ENCODE measurements at regions of chr6 and their contacts with region 1.

Region 1: GRCh38 chr6:43758617-43759050 is 11.4 kb upstream of the VEGFA start:
- DNase-seq: peak; percentile 68
- H3K4me3 ChIP-seq: no peak overlapping the region
- H3K27ac ChIP-seq: no peak overlapping the region
- H3K4me1 ChIP-seq: peaks cover 0 to 8% (median 0%) of the 10 kb centered on the region in 6 donors
- H3K27me3 ChIP-seq: no peaks in the 10 kb centered on the region
- CTCF ChIP-seq: peak in 7 of 11 experiments; percentile 33 to 64 (median 56)
- POLR2A ChIP-seq: no peak

Region 2: GRCh38 chr6:43496370-43497128 is 262.1 kb before region 1 on chr6:
- intact Hi-C with region 1: no loop called
- DNase-seq: no peak
- H3K4me3 ChIP-seq: no peak overlapping the region
- H3K27ac ChIP-seq: no peak overlapping the region
- H3K4me1 ChIP-seq: peaks cover 0 to 30% (median 18%) of the 10 kb centered on the region in 6 donors
- H3K27me3 ChIP-seq: no peaks in the 10 kb centered on the region
- CTCF ChIP-seq: peak in 6 of 11 experiments; percentile 9 to 42 (median 28)
- POLR2A ChIP-seq: no peak

Region 3: GRCh38 chr6:43667245-43668150 is 91.1 kb before region 1 on chr6:
- intact Hi-C with region 1: loop called (anchors 10 kb)
- DNase-seq: peak; percentile 93
- H3K4me3 ChIP-seq: peak overlapping the region in 1 of 8 donors; percentile 37
- H3K27ac ChIP-seq: peak overlapping the region in 7 of 8 donors; percentile 14 to 72 (median 62)
- H3K4me1 ChIP-seq: peaks cover 11 to 56% (median 26%) of the 10 kb centered on the region in 6 donors
- H3K27me3 ChIP-seq: peaks cover 0 to 5% (median 0%) of the 10 kb centered on the region in 7 donors
- CTCF ChIP-seq: peak; percentile 93 to 98 (median 96)
- POLR2A ChIP-seq: no peak

Measured in spleen (tissue), 13 donors.